ENCODE measurements at regions of chr3 and their contacts with region 1.

Region 1: GRCh38 chr3:39107388-39108199 is at the starts of genes GORASP1 and TTC21A:
- DNase-seq: peak; percentile 84
- H3K4me3 ChIP-seq: peak within 1 kb of the TSS; percentile 80 to 99 (median 82)
- H3K27ac ChIP-seq: peak within 1 kb of the TSS; percentile 97 to 100
- H3K4me1 ChIP-seq: peaks cover 8 to 37% of the 10 kb centered on the region in 2 donors
- H3K27me3 ChIP-seq: no peaks in the 10 kb centered on the region
- CTCF ChIP-seq: no peak
- POLR2A ChIP-seq: peak; percentile 52
- total RNA-seq, gene GORASP1: 58.2 to 98.8 (median 77.3) TPM
- total RNA-seq, gene TTC21A: 5.9 to 16.1 (median 13.1) TPM

Region 2: DNA sequence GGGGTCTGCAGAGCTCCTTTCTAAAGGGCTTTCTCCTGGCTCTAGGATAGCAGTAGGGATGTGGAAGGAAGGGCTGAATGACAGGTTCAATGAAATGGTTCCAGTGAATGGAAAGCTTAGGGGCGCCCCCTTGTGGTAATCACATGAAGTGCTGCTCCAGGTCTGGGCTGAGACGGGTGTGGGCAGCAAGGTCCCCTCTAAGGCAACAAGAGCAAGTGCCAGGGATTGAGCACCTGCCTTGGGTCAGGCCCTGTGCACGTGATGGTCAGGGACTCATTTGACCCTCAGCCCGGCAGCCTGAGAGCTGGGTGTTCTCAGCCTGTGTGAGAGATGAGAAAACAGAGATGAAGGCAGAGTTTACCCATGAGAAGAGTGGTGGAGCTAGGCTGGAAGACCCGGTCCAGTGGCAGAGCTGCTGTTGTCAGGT is 184.3 kb after region 1 on chr3:
- intact Hi-C with region 1: loop called (anchors 10 kb)
- DNase-seq: peak; percentile 36 to 75
- H3K4me3 ChIP-seq: no peak overlapping the region
- H3K27ac ChIP-seq: no peak overlapping the region
- H3K4me1 ChIP-seq: no peaks in the 10 kb centered on the region
- H3K27me3 ChIP-seq: no peaks in the 10 kb centered on the region
- CTCF ChIP-seq: peak; percentile 82 to 86 (median 82)
- POLR2A ChIP-seq: no peak

Region 3: GRCh38 chr3:40211579-40211978 is 1104.0 kb after region 1 on chr3:
- intact Hi-C with region 1: no loop called
- DNase-seq: no peak
- H3K4me3 ChIP-seq: no peak overlapping the region
- H3K27ac ChIP-seq: no peak overlapping the region
- H3K4me1 ChIP-seq: no peaks in the 10 kb centered on the region
- H3K27me3 ChIP-seq: no peaks in the 10 kb centered on the region
- CTCF ChIP-seq: no peak
- POLR2A ChIP-seq: no peak

Measured in breast epithelium (tissue), 4 donors.